Heart right ventricle (tissue), 16 donors: ENCODE measurements at regions of chr1 and their contacts with region 1.

Region 1: DNA sequence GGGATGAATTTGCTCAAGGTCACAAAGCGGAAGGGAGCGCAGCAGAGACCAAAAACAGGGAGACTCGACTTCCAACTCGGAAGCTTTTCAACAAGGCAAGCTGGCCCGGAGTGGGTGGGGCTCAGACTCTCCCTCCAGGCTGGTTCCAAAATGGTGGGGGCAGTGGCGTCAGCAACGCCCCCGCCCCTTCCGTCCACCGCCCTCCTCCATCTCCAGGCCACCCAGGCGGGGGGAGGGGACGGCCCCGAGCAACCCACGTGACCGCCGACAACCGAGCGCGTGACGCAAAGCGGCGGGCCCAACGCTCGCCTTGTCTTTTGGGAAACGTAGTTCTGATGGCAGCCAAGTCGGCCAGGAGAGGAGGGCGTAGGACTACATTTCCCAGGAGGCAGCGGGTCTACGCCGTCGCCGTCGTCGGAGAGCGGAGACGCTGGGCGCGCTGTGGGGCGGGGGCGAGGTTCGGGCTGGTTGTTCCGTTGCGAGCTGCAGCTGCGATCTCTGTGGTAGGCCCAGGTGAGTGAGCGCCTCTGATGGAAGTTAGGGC is at the start of gene THRAP3:
- DNase-seq: peak; percentile 99
- ATAC-seq: peak; percentile 96 to 98 (median 97)
- H3K4me3 ChIP-seq: peak within 1 kb of the TSS; percentile 63 to 88 (median 79)
- H3K27ac ChIP-seq: peak within 1 kb of the TSS; percentile 93 to 99 (median 96)
- H3K4me1 ChIP-seq: peaks cover 3 to 53% (median 45%) of the 10 kb centered on the region in 9 donors
- H3K27me3 ChIP-seq: no peaks in the 10 kb centered on the region
- CTCF ChIP-seq: no peak
- total RNA-seq, gene THRAP3: 85.3 to 109 (median 100) TPM

Region 2: GRCh38 chr1:34859446-34860200 is 1364.4 kb before region 1 on chr1 and contains the start of gene SMIM12:
- intact Hi-C with region 1: no loop called
- DNase-seq: peak; percentile 94 to 96
- ATAC-seq: peak; percentile 96 to 100 (median 98)
- H3K4me3 ChIP-seq: peak within 1 kb of the TSS; percentile 79 to 96 (median 91)
- H3K27ac ChIP-seq: peak within 1 kb of the TSS; percentile 77 to 96 (median 90)
- H3K4me1 ChIP-seq: peaks cover 8 to 37% (median 26%) of the 10 kb centered on the region in 9 donors
- H3K27me3 ChIP-seq: no peaks in the 10 kb centered on the region
- CTCF ChIP-seq: peak; percentile 80 to 95 (median 91)
- total RNA-seq, gene SMIM12: 33.9 to 74.2 (median 43.7) TPM

Region 3: GRCh38 chr1:36160949-36161485 is 63.0 kb before region 1 on chr1:
- intact Hi-C with region 1: loop called in 1 of 10 experiments (anchors 5 kb)
- DNase-seq: peak; percentile 72 to 82
- ATAC-seq: peak; percentile 25 to 71 (median 57)
- H3K4me3 ChIP-seq: peak overlapping the region; percentile 5 to 58 (median 50)
- H3K27ac ChIP-seq: peak overlapping the region; percentile 83 to 100 (median 98)
- H3K4me1 ChIP-seq: peaks cover 31 to 87% (median 80%) of the 10 kb centered on the region in 9 donors
- H3K27me3 ChIP-seq: no peaks in the 10 kb centered on the region
- CTCF ChIP-seq: peak in 6 of 9 donors; percentile 31 to 60 (median 46)

Region 4: DNA sequence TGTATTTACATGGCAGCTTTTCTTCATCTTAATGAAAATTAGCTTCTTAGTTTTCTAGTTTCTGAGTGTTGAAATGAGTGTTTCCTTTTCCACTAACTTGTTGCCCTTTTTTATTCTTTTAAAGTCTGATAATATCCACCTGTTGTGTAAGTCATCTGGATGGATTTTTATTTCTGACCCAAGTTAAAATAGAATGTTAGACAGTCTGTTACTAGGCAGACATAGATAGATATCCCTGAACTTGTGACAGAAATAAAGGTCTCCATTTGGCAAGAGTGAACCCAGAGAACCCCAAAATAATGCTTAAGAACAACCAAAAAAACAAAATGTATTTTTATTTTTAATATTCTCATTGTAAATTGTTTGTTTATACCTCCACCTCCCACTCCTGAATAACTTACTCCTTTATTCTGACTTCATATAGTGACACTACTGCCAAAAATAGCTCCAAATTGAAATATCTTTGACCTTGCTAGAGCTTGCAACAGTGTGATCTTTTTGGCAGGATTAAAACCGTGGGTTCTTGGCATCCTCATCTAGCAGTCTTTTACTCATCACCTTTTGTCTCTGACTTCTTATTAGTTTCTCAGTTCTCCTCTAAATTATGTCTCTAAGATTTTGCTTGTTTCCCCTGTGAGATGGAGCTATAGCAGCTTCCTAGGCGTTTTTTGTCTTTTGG is 55.2 kb after region 1 on chr1:
- intact Hi-C with region 1: loop called in 4 of 10 experiments (anchors 2 to 10 kb)
- DNase-seq: no peak
- ATAC-seq: peak in 7 of 8 donors; percentile 69 to 88 (median 77)
- H3K4me3 ChIP-seq: no peak overlapping the region
- H3K27ac ChIP-seq: peak overlapping the region; percentile 43 to 86 (median 76)
- H3K4me1 ChIP-seq: peaks cover 0 to 75% (median 49%) of the 10 kb centered on the region in 9 donors
- H3K27me3 ChIP-seq: no peaks in the 10 kb centered on the region
- CTCF ChIP-seq: no peak

Region 5: GRCh38 chr1:36328713-36329112 is 104.6 kb after region 1 on chr1:
- intact Hi-C with region 1: no loop called
- DNase-seq: no peak
- ATAC-seq: peak in 6 of 8 donors; percentile 44 to 66 (median 61)
- H3K4me3 ChIP-seq: no peak overlapping the region
- H3K27ac ChIP-seq: no peak overlapping the region
- H3K4me1 ChIP-seq: peaks cover 7 to 34% (median 24%) of the 10 kb centered on the region in 9 donors
- H3K27me3 ChIP-seq: no peaks in the 10 kb centered on the region
- CTCF ChIP-seq: no peak

Region 6: DNA sequence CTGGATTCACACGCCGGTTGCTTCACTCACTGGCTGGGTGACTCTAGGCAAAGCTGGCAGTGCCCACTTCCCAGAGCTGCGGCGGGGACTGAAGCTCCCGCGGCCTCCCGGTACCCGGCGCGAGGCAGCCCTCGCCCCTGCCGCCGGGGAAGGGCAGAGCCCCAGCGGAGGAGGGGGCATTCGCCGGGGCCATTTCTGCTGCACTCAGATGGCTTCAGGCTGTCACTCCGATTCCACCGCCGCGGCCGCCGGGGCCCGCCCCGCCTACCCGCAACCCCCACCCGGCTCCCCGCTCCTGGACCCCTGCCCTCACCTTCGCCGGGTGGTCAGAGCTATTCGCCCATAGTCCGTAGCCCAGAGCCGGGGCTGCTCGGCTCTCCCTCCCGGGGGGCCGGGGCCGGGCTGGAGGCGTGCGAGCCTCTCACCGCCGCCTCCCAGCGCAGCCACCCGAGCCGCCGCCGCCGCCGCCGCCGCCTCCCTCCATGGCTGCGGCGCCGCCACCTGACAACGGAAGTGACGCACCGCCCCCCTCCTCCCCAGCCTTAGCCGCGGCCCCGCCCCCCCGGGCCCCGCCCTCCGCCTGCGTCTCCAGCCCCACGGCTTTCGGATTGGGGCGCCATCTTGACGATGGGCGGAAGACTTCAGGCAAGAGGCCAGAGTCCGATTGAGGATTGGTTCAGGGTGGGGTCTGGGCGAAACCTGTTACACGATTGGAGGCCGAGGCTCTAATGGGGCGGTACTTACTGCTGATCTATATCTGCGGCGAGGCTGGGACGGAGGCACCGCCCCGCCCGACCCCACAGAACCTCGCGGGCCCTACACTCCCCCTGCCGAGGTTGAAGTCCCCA is 161.6 kb after region 1 on chr1 and contains the start of gene STK40:
- intact Hi-C with region 1: loop called in 1 of 10 experiments (anchors 10 kb)
- DNase-seq: peak; percentile 98 to 99
- ATAC-seq: peak; percentile 88 to 97 (median 94)
- H3K4me3 ChIP-seq: peak within 1 kb of the TSS; percentile 83 to 100 (median 95)
- H3K27ac ChIP-seq: peak within 1 kb of the TSS; percentile 78 to 99 (median 96)
- H3K4me1 ChIP-seq: peaks cover 11 to 84% (median 73%) of the 10 kb centered on the region in 9 donors
- H3K27me3 ChIP-seq: no peaks in the 10 kb centered on the region
- CTCF ChIP-seq: peak in 1 of 9 donors; percentile 13
- total RNA-seq, gene STK40: 45.2 to 81.6 (median 60.8) TPM